ENCODE measurements at regions of chr7 and their contacts with region 1.

Region 1: DNA sequence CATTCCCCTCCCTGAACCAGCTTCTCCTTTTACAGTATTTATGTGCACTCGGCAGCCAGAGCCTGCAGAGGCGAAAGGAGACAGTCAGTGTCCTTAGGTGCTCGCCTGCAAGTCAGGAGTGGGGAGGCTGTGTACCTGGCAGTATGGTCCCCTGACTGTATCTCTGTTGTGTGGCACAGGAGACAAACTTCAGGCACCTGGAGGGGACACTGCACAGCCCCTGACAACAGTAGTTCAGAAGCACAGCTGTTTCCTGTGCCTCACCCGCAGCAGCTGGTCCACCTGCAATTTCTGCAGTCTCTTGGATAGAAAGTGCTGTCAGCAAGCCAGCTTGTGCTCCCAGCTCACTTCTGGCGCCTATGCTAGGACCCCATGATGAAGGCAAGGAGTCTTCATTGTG is 73.4 kb upstream of the LAMB4 start:
- DNase-seq: no peak
- H3K4me3 ChIP-seq: no peak overlapping the region
- H3K27ac ChIP-seq: no peak overlapping the region
- H3K4me1 ChIP-seq: no peaks in the 10 kb centered on the region
- H3K27me3 ChIP-seq: no peaks in the 10 kb centered on the region
- CTCF ChIP-seq: no peak
- POLR2A ChIP-seq: no peak

Region 2: GRCh38 chr7:108167460-108167859 is 36.1 kb before region 1 on chr7:
- intact Hi-C with region 1: no loop called
- DNase-seq: no peak
- H3K4me3 ChIP-seq: peak overlapping the region in 2 of 3 donors; percentile 8 to 31
- H3K27ac ChIP-seq: no peak overlapping the region
- H3K4me1 ChIP-seq: no peaks in the 10 kb centered on the region
- H3K27me3 ChIP-seq: no peaks in the 10 kb centered on the region
- CTCF ChIP-seq: no peak
- POLR2A ChIP-seq: no peak

Region 3: DNA sequence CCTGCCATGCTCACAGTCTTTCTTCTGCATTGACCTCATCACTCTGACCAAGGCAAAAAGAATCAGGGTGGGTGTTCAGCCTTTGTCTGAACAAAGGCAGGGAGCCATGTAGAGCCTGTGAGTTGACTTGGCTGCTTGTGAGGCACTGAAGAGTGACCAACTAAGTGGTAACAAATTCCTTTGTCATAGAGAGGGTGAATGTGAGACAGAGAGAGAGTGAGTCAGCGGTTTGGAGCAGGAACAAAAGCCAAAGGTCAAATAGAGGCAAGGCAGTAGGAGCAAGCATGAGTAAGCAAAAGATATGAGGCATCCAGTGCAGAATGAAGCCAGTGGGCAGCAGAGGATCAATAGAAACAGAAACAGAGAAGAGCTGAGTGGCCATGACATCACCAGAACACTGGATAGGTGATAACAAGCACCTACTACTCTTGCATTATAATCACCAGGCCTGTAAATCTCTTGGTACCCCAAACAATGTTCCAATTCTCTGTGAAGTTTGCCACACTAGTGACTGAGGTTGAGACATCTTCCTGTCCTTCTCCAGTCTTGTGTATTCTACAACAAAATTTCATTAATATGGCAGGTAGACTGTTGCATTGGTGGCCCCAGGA is 42.8 kb after region 1 on chr7:
- intact Hi-C with region 1: no loop called
- DNase-seq: no peak
- H3K4me3 ChIP-seq: no peak overlapping the region
- H3K27ac ChIP-seq: no peak overlapping the region
- H3K4me1 ChIP-seq: no peaks in the 10 kb centered on the region
- H3K27me3 ChIP-seq: no peaks in the 10 kb centered on the region
- CTCF ChIP-seq: no peak
- POLR2A ChIP-seq: no peak

Region 4: DNA sequence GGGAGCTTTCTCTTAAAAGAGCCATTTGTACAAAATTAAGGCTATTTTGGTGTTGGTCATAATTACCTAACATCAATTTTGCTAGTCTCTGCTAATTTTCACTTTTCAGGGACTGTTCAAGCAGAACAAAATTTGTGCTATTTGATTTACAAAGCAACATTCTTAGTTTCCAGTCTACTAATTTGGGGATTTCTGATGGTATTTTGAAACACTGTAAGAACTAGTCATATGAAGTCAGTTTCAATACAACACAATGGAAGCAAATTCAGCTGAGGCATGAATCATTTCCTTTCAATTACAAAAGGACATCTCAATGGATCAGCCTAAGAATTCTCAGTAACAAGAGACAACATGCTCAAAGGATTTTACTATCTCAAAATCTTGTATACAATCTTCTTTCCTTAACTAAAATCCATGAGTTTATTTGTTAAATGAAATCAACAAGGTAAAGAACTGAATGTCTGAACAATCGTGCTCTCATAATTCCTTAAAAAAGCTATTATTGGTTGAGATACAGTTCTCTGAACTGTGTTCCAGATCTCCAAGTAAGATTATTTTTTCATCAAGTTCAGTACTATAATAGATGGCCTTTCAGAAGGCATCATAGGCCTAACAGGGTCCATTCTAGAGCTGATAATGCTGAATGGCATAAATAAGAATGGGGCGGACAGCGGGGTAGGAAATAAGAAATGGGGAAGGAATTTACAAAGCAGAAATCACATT is 108.1 kb after region 1 on chr7:
- intact Hi-C with region 1: loop called (anchors 5 kb)
- DNase-seq: no peak
- H3K4me3 ChIP-seq: no peak overlapping the region
- H3K27ac ChIP-seq: no peak overlapping the region
- H3K4me1 ChIP-seq: no peaks in the 10 kb centered on the region
- H3K27me3 ChIP-seq: no peaks in the 10 kb centered on the region
- CTCF ChIP-seq: no peak
- POLR2A ChIP-seq: no peak

Measured in breast epithelium (tissue), 4 donors.